ENCODE measurements at regions of chr16 and their contacts with region 1.

Region 1: DNA sequence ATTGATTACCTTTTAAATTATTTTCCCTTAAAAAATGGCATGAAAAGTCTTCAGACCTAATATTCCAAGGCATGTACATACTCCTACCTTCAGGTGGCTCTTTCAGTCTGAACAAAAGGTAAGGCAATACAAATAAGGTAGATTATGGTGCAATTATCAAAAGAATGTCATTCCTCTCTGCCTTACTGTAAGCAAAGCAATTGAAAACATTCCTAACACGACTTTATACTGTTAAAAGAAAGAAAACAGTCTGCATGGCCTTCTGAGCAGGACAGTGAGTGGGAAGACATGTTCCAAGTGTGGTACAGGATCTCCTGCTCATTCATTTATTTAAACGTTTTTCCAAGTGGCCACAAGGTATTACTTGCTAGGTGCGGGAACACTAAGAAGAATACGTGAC is 162.5 kb downstream of the PARN start:
- DNase-seq: no peak
- ATAC-seq: peak; percentile 64; the same call in 1 of the 2 replicates
- H3K4me3 ChIP-seq: no peak overlapping the region
- H3K27ac ChIP-seq: no peak overlapping the region
- H3K4me1 ChIP-seq: peaks cover 5% of the 10 kb centered on the region; the same call in 1 of the 2 replicates
- H3K27me3 ChIP-seq: no peaks in the 10 kb centered on the region
- CTCF ChIP-seq: no peak
- POLR2A ChIP-seq: no peak
- RAD21 ChIP-seq: no peak

Region 2: GRCh38 chr16:14454391-14454790 is 13.2 kb before region 1 on chr16:
- CTCF ChIA-PET with region 1: no interaction called
- POLR2A ChIA-PET with region 1: no interaction called
- dilution Hi-C with region 1: no loop called
- in situ Hi-C with region 1: no loop called
- intact Hi-C with region 1: loop called (anchors 2 kb)
- DNase-seq: peak; percentile 81
- ATAC-seq: peak; percentile 48
- H3K4me3 ChIP-seq: no peak overlapping the region
- H3K27ac ChIP-seq: no peak overlapping the region
- H3K4me1 ChIP-seq: peaks cover 11% of the 10 kb centered on the region
- H3K27me3 ChIP-seq: no peaks in the 10 kb centered on the region
- CTCF ChIP-seq: no peak
- POLR2A ChIP-seq: no peak
- RAD21 ChIP-seq: no peak

Measured in IMR-90 (cell line).